ENCODE measurements at regions of chr4 and their contacts with region 1.

Region 1: DNA sequence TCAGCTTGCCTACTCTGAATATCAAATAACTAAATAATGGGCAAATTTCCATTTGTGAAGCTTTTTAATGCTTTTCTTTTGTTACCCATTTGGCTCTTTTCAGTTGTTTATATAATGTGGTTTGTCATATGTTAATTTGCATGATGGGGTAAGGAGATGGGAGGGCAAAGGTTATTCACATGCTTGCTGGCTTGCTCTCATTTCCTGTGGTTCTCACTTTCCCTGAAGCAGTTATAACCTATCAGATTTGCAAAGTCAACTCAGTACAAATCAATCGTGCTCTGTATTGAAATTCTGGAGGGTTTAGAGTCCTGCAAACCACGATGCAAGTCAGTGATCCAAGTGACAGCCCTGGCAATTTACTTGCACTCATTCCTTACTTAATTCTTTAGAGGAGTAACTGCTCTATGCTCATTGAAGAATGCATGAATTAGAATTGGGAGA is 711.2 kb downstream of the ADGRL3 start:
- DNase-seq: no peak
- ATAC-seq: peak; percentile 76
- H3K4me3 ChIP-seq: no peak overlapping the region
- H3K27ac ChIP-seq: no peak overlapping the region
- H3K4me1 ChIP-seq: no peaks in the 10 kb centered on the region
- H3K27me3 ChIP-seq: no peaks in the 10 kb centered on the region
- CTCF ChIP-seq: no peak
- EP300 ChIP-seq: no peak
- POLR2A ChIP-seq: no peak
- RAD21 ChIP-seq: no peak

Region 2: DNA sequence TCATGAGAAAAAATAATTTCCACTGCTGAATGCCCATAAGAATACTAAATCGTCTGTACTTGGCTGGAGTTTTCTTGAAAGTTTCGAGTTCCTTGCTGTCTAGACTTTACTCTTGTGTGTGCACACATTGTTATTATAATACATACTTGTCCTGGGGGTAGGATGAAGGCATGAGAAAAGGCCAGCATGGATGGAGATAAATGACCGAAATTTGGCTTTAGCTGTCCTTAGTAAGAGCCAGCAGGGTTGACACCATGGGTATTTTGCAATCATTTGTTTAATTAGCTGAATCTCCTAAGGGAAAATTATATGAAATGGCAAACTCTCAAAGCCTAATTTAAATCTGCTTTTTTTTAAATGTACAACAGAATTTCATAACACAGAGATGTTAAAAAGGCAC is 69.6 kb before region 1 on chr4:
- CTCF ChIA-PET with region 1: no interaction called
- POLR2A ChIA-PET with region 1: no interaction called
- RAD21 ChIA-PET with region 1: no interaction called
- SMC1A ChIA-PET with region 1: no interaction called
- in situ Hi-C with region 1: loop called (anchors 10 kb)
- intact Hi-C with region 1: no loop called
- DNase-seq: no peak
- ATAC-seq: no peak
- H3K4me3 ChIP-seq: no peak overlapping the region
- H3K27ac ChIP-seq: no peak overlapping the region
- H3K4me1 ChIP-seq: no peaks in the 10 kb centered on the region
- H3K27me3 ChIP-seq: no peaks in the 10 kb centered on the region
- CTCF ChIP-seq: no peak
- EP300 ChIP-seq: no peak
- POLR2A ChIP-seq: no peak
- RAD21 ChIP-seq: no peak

Region 3: GRCh38 chr4:61877893-61878292 is 33.4 kb before region 1 on chr4:
- CTCF ChIA-PET with region 1: no interaction called
- POLR2A ChIA-PET with region 1: interaction called, 3 read pairs
- RAD21 ChIA-PET with region 1: interaction called, 7 read pairs
- SMC1A ChIA-PET with region 1: interaction called, 11 read pairs
- in situ Hi-C with region 1: no loop called
- intact Hi-C with region 1: no loop called
- DNase-seq: no peak
- ATAC-seq: no peak
- H3K4me3 ChIP-seq: no peak overlapping the region
- H3K27ac ChIP-seq: no peak overlapping the region
- H3K4me1 ChIP-seq: no peaks in the 10 kb centered on the region
- H3K27me3 ChIP-seq: no peaks in the 10 kb centered on the region
- CTCF ChIP-seq: no peak
- EP300 ChIP-seq: no peak
- POLR2A ChIP-seq: no peak
- RAD21 ChIP-seq: no peak

Region 4: DNA sequence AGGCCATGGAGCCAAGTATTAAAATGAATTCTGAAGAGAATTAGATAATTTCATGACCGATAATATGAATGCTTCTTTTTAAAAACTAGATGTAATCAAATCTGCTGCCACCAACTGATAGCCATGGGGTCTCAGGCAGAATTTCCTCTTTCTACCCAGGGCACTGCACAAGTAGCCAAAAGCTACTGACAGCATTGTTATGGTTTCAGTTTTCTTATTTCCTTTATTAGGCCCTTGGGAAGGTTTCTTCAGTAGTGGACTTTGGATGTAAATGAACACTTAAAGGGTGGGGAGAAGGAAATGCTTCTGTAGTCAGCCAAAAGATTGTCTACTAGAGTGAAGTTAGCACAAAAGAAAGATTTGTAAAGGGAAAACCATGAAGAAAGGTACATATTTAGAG is 25.2 kb before region 1 on chr4:
- CTCF ChIA-PET with region 1: interaction called, 7 read pairs
- POLR2A ChIA-PET with region 1: no interaction called
- RAD21 ChIA-PET with region 1: interaction called, 4 read pairs
- SMC1A ChIA-PET with region 1: interaction called, 11 read pairs
- in situ Hi-C with region 1: no loop called
- intact Hi-C with region 1: no loop called
- DNase-seq: no peak
- ATAC-seq: no peak
- H3K4me3 ChIP-seq: no peak overlapping the region
- H3K27ac ChIP-seq: no peak overlapping the region
- H3K4me1 ChIP-seq: no peaks in the 10 kb centered on the region
- H3K27me3 ChIP-seq: no peaks in the 10 kb centered on the region
- CTCF ChIP-seq: no peak
- EP300 ChIP-seq: no peak
- POLR2A ChIP-seq: no peak
- RAD21 ChIP-seq: no peak

Region 5: DNA sequence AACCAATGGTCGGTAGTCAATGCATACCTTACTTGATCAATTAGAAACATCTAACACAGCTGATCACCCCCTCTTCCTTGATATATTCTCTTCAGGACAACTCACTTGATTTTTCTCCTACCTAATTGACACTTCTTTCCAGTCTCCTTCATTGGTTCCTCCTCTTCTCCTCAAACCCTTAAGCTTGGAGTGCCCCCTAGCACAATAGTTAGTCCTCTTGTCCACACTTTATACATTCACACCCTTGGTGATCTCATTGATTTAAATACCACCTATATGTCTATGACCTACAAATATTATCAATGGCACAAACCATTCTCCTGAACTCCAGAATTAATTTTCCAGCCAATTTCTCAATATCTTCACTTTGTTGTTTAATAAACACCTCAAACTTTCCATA is 12.8 kb after region 1 on chr4:
- CTCF ChIA-PET with region 1: interaction called, 6 read pairs
- POLR2A ChIA-PET with region 1: interaction called, 10 read pairs
- RAD21 ChIA-PET with region 1: interaction called, 27 read pairs
- SMC1A ChIA-PET with region 1: interaction called, 54 read pairs
- in situ Hi-C with region 1: no loop called
- intact Hi-C with region 1: no loop called
- DNase-seq: no peak
- ATAC-seq: 0 out of 3 replicates have a peak, but pooled peaks have one; percentile 33
- H3K4me3 ChIP-seq: no peak overlapping the region
- H3K27ac ChIP-seq: no peak overlapping the region
- H3K4me1 ChIP-seq: no peaks in the 10 kb centered on the region
- H3K27me3 ChIP-seq: no peaks in the 10 kb centered on the region
- CTCF ChIP-seq: no peak; a peak in 1 of 6 replicates
- EP300 ChIP-seq: no peak
- POLR2A ChIP-seq: no peak
- RAD21 ChIP-seq: no peak

Measured in GM12878 (cell line).